Motor neuron (in vitro differentiated cells): ENCODE measurements at regions of chr19 and their contacts with region 1.

Region 1: DNA sequence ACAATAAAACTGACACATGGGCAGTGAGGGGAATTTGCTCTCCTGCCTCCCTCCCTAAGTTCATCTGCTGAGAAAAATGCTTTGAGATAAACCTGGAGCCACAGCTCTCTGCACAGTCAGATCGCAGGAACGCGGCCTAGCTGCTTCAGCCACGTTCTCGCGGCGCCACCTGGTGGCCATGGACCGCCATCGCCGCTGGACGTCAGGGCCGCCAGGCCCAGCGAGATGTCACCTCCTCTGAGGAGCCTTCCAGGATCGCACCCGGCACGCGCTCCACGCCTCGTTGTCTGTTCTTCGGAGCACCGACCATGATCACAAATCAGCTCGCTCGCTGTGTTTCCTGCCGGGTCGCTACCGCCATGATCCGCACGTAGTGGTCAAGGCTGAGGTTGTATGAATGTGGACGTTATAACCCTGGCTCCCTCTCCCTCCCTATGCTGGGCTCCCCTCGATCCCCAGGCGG is 20.6 kb upstream of the USP29 start:
- ATAC-seq: peak in 5 of 8 experiments; percentile 27 to 79 (median 60)
- H3K4me3 ChIP-seq: no peak overlapping the region
- H3K27ac ChIP-seq: no peak overlapping the region
- H3K4me1 ChIP-seq: no peaks in the 10 kb centered on the region

Region 2: DNA sequence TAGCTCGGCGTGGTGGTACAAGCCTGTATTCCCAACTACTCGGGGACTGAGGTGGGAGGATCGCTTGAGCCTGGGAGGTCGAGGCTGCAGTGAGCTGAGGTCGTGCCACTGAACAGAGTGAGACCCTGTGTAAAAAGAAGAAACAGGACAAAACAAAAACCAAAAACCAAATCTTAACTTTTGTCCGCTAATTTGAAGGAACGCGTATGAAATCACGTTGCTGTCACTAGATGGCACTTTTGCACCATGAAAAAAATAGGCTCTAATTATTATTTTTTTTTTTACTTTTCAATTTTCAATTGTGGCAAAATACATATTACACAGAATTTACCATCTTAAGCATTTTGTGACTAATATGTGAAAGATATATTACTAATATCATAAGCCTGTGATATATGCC is 410.0 kb before region 1 on chr19:
- in situ Hi-C with region 1: no loop called
- ATAC-seq: no peak
- H3K4me3 ChIP-seq: no peak overlapping the region
- H3K27ac ChIP-seq: no peak overlapping the region
- H3K4me1 ChIP-seq: peaks cover 3 to 7% of the 10 kb centered on the region in 2 donors

Region 3: DNA sequence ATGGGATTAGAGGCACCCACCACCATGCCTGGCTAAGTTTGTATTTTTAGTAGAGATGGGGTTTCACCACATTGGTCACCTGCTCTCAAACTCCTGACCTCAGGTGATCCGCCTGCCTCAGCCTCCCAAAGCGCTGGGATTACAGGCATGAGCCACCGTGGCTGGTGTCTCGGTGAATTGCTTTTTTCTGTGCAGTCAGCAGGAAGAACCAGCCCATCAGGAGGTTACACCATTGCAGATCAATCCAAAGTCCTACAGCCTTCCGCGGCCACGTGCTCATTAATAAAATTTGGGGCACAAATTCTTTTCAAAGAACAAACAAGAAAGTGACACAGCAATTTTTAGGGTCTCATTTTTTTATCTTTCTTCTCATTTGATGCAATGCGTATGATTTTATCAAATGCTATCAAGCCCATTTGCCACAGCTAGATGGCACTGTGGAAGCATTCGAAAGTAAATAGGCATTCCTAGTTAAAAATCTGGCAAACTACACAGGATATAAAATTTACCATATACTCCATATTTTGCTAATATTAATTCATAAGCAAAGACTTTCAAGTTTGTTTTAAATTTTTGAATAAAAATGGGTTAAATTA is 373.3 kb before region 1 on chr19:
- in situ Hi-C with region 1: loop called in 1 of 9 experiments (anchors 10 kb)
- ATAC-seq: no peak
- H3K4me3 ChIP-seq: no peak overlapping the region
- H3K27ac ChIP-seq: no peak overlapping the region
- H3K4me1 ChIP-seq: peaks cover 5 to 14% of the 10 kb centered on the region in 2 donors

Region 4: GRCh38 chr19:56765137-56765536 is 334.1 kb before region 1 on chr19:
- in situ Hi-C with region 1: loop called in 1 of 9 experiments (anchors 25 kb)
- ATAC-seq: peak in 1 of 8 experiments; percentile 92
- H3K4me3 ChIP-seq: peak overlapping the region in 1 of 5 donors; percentile 48
- H3K27ac ChIP-seq: no peak overlapping the region
- H3K4me1 ChIP-seq: no peaks in the 10 kb centered on the region